ENCODE measurements at regions of chr12 and their contacts with region 1.

Region 1: DNA sequence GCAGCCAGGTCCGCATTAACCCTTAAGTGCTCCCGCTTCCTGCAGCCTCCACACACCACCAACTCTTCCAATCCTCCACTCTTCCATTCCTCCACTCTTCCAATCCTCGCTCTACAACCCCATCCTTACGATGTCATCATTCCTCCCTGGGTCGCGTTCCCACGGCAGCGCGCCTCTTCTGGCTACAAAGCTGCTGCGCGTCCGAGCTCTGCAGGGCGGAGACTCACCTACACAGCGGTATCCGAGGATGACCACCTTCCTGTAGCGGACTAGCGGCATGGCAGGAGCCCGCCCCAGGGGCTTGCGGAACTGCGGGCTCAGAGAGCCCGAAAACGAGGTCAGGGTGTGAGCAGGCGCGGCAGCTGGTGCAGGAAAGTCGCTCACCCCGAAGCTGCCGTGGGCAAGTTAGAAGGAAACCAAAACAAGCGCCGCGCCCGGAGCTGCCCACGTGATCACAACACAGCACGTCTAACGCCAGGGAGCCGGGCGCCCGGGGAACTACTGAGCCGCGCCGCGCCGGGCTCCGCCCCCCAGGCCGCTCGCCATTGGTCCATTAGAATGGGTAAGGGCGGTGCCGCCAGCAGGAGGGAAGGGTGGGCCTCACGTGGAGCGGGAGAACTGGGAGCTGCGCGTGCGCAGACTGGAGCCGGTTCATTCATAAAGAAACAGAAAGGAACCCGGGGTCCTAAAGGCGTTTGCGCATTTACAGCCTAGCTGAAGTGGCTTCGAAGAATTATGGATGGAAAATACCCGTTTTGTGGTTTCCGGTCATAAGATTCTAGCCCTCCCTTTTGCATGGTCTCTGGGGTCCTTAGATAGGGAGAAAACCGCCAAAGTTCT is at the start of gene RHEBL1:
- DNase-seq: peak; percentile 98 to 99 (median 99)
- H3K4me3 ChIP-seq: peak within 1 kb of the TSS; percentile 62 to 97 (median 88)
- H3K27ac ChIP-seq: peak within 1 kb of the TSS in 1 of 2 experiments; percentile 75
- H3K4me1 ChIP-seq: peaks cover 3 to 27% (median 12%) of the 10 kb centered on the region in 4 experiments
- H3K27me3 ChIP-seq: no peaks in the 10 kb centered on the region

Region 2: DNA sequence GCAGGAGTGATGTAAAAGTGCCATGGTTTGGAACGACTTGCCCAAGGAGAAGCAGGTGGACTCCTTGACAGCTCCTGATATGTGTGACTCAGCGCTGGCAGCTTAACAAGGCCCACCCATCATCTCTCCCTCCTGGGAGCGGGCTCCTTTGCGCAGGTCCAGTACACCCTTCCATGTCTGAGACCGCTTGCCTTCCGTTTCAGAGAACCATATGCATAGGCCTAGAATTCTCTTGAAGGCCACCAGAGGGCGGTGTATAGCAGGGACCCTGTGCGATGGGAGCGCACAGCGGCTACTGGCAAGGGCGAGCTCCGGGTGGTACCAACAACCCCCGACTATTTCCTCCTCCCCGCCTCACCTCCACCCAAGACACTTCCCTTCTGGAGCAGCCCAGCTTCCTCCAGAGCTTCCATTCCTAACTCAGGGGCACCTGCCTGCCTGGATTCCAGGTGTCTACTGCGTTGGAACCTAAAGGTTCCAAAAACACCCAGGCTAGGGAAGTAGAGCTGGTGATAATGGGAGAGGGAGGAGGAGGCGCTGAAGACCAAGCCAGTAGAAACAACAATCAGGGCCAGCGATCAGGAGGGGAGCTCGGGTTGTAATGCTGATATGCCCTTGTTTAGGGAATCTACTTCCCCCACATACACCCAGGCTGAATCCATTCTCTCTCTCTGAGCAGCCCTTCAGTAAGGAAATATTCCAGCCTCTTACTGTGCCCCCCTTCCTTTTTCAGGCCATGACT is 18.6 kb after region 1 on chr12:
- CTCF ChIA-PET with region 1: interaction called, 326 read pairs
- POLR2A ChIA-PET with region 1: interaction called, 6 read pairs
- DNase-seq: peak; percentile 87 to 91 (median 90)
- H3K4me3 ChIP-seq: peak overlapping the region in 6 of 7 experiments; percentile 1 to 60 (median 35)
- H3K27ac ChIP-seq: no peak overlapping the region
- H3K4me1 ChIP-seq: peaks cover 11 to 51% (median 44%) of the 10 kb centered on the region in 4 experiments
- H3K27me3 ChIP-seq: peaks cover 13 to 50% (median 23%) of the 10 kb centered on the region in 5 experiments

Measured in common myeloid progenitor, CD34-positive (primary cell).